H1 (cell line): ENCODE measurements at regions of chr2 and their contacts with region 1.

Region 1: GRCh38 chr2:134368009-134368817 is 114.3 kb downstream of the MGAT5 start:
- DNase-seq: no peak
- H3K4me3 ChIP-seq: no peak overlapping the region
- H3K27ac ChIP-seq: no peak overlapping the region
- H3K4me1 ChIP-seq: no peaks in the 10 kb centered on the region
- H3K27me3 ChIP-seq: no peaks in the 10 kb centered on the region
- CTCF ChIP-seq: no peak
- EP300 ChIP-seq: no peak
- POLR2A ChIP-seq: no peak
- RAD21 ChIP-seq: no peak

Region 2: DNA sequence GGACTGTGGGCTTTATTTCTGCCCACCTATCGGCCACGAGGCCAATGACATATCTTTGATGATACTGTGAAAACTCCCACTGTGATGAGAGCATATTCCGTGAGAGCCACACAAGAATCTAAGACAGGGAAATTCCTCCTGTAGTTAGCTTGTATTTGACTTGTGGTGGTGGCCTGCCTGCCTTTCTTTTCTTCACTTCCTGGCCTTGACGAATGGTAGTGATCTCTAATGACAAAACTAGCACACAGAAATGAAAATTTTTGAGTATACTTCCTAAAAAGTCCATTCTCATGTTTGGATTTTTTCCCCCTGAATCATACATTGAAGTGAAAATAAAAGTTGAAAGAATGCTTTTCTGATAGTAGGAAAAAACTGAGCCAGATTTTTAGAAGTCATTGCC is 20.0 kb before region 1 on chr2:
- CTCF ChIA-PET with region 1: interaction called, 22 read pairs
- POLR2A ChIA-PET with region 1: no interaction called
- DNase-seq: no peak
- H3K4me3 ChIP-seq: no peak overlapping the region
- H3K27ac ChIP-seq: no peak overlapping the region
- H3K4me1 ChIP-seq: peaks cover 0 to 2% (median 0%) of the 10 kb centered on the region in 4 experiments; a peak in 1 of 7 replicates
- H3K27me3 ChIP-seq: no peaks in the 10 kb centered on the region
- CTCF ChIP-seq: no peak
- EP300 ChIP-seq: no peak
- POLR2A ChIP-seq: no peak
- RAD21 ChIP-seq: no peak

Region 3: GRCh38 chr2:134402410-134402809 is 34.2 kb after region 1 on chr2:
- CTCF ChIA-PET with region 1: interaction called, 17 read pairs
- POLR2A ChIA-PET with region 1: no interaction called
- DNase-seq: no peak
- H3K4me3 ChIP-seq: no peak overlapping the region
- H3K27ac ChIP-seq: no peak overlapping the region
- H3K4me1 ChIP-seq: no peaks in the 10 kb centered on the region; a peak in 2 of 7 replicates
- H3K27me3 ChIP-seq: no peaks in the 10 kb centered on the region
- CTCF ChIP-seq: no peak
- EP300 ChIP-seq: no peak
- POLR2A ChIP-seq: no peak
- RAD21 ChIP-seq: no peak